ENCODE measurements at regions of chr11 and their contacts with region 1.

Region 1: DNA sequence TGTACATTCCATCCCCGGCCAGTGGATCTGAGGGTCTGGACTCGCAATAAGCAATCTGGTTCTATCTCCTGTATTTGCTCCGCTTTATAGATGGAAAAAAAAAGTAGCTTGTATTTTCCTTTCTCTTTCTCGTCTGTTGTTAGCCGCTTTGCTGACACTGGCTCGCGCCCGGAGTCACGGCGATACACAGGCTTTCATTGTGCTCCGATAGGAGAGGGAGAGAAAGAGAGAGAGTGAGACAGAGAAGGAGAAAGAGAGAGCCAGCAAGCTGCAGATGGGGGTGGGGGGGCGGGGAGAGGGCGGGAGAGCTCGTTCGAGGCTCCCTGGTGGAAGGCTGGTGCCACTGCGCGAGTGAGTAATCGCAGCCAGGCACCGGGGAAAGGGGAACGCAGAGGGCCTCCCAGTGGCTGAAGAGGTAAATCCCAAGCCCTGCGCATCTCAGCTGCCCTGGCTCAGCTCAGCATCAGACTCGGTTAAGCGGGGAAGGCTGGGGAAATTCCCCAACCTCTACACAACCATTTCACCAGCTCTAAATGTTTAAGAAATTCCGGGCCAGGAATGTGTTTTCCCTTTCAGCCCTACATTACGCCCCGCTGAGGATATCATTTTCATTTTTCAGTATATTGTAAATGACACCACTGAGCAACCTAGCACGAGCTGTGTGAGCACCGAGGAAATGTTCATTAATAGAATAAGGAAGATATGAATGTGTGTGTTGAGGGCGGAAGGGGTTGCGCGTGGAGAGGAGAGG is at the start of gene MAML2:
- DNase-seq: peak; percentile 81 to 84
- H3K4me3 ChIP-seq: peak within 1 kb of the TSS; percentile 48 to 95 (median 70)
- H3K27ac ChIP-seq: no peak within 1 kb of the TSS
- H3K4me1 ChIP-seq: peaks cover 0 to 19% (median 6%) of the 10 kb centered on the region in 4 experiments; a peak in 6 of 7 replicates
- H3K27me3 ChIP-seq: peaks cover 0 to 3% (median 0%) of the 10 kb centered on the region in 4 experiments; a peak in 1 of 7 replicates
- CTCF ChIP-seq: peak; percentile 89 to 98 (median 95)
- EP300 ChIP-seq: peak in 1 of 2 experiments; percentile 5; a peak in 1 of 3 replicates
- POLR2A ChIP-seq: no peak
- RAD21 ChIP-seq: peak; percentile 87 to 93
- total RNA-seq, gene MAML2: 6.6 and 6.8 TPM in 2 replicates

Region 2: DNA sequence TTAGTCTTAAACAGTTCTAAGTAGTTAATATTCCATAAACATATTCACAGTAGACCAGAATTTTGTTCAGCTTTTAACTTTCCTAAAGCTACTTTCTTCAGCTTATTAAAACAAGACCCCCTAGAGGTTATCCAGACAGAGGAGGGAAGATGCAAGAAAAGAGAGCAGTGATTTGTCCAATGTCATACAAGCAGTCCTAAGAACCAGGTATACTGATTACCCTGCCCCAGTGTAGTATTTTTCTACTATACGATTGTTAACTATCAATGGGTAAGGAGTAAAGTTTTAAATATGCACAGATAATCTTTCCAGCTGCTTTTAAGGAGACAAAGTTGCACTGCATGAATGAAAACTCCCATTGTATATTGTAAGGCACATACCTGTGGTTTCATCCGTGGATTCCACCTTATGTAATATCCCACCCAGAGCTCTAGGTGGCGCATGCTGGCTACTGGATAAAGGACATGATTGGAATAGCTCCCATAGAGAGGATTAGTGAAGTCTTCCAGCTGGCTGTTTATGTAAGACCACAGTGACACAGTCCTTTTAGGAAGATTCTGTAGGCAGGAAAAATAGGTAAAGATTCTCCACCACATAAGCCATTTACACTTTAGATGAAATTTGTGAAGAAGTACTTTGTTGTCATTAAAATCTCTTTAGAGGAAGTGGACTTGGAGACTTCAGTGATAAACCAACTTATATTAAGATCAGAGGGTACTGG is 507.2 kb before region 1 on chr11:
- CTCF ChIA-PET with region 1: interaction called, 16 read pairs
- POLR2A ChIA-PET with region 1: interaction called, 3 read pairs
- DNase-seq: peak; percentile 5 to 55
- H3K4me3 ChIP-seq: no peak overlapping the region
- H3K27ac ChIP-seq: no peak overlapping the region
- H3K4me1 ChIP-seq: no peaks in the 10 kb centered on the region
- H3K27me3 ChIP-seq: no peaks in the 10 kb centered on the region
- CTCF ChIP-seq: peak; percentile 6 to 85 (median 74)
- EP300 ChIP-seq: no peak
- POLR2A ChIP-seq: no peak
- RAD21 ChIP-seq: peak; percentile 86 to 92

Region 3: DNA sequence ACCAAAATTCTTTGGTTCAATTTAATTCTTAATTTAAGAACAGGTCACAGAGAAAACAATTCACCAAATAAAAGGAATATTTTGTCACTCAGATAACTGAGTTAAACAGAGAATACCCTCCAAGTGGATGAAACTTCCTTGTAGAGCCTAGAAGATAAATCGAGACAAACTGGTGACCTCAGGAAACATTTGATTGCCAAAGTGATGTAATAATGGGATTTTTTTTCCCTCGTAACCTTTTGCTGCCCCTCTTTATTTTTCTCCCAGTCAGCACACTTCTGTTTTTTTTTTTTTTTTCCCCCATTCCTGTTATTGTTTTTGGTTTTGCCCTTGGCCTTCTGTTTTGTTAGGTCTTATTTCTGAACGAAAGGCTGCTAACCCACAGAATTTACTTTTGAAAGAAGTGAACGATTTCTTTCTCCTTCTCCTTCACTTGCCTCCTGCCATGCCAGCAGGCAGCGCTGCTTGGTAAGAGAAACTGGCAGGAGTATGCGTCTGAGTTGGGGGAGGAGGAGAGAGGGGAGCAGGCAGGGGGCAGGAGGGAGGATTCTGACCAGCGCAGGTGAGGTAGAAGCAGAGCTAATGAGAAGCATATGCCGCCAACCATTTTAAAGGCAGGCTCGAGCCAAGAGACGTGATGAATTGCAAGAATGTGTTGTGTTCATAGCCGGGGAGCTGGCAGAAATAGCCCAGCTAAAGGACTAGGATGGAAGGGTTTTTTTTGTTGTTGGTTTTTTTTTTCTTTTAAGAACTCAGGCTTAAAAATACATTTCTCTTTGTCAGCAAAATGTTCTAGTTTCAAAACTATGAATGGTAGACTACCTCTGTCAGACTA is 297.3 kb before region 1 on chr11:
- CTCF ChIA-PET with region 1: interaction called, 13 read pairs
- POLR2A ChIA-PET with region 1: no interaction called
- DNase-seq: peak; percentile 57 to 73
- H3K4me3 ChIP-seq: no peak overlapping the region; a peak in 3 of 8 replicates
- H3K27ac ChIP-seq: no peak overlapping the region
- H3K4me1 ChIP-seq: peaks cover 2 to 7% (median 4%) of the 10 kb centered on the region in 4 experiments; a peak in 5 of 7 replicates
- H3K27me3 ChIP-seq: no peaks in the 10 kb centered on the region
- CTCF ChIP-seq: peak; percentile 49 to 69 (median 65)
- EP300 ChIP-seq: no peak
- POLR2A ChIP-seq: no peak
- RAD21 ChIP-seq: peak; percentile 87 to 88

Region 4: DNA sequence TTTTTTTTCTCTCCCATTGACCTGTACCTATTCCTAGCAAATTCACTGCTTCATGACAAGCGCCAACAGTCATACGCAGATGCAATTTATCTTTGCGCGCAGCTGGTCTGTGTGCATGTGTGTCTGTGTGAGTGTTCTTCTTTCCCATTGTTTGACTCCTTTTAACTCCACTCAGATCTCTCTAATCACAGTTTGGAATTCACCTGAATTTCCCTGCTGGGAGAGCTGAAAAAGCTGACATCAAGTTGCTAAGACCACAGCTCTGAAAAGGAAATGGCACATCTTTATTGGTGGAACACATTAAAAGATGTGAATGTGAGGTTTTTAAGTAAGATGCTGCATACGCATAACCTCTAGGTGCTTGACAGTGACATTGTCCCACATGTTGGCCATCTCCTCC is 231.8 kb before region 1 on chr11:
- CTCF ChIA-PET with region 1: interaction called, 19 read pairs
- POLR2A ChIA-PET with region 1: no interaction called
- DNase-seq: no peak
- H3K4me3 ChIP-seq: no peak overlapping the region
- H3K27ac ChIP-seq: no peak overlapping the region
- H3K4me1 ChIP-seq: peaks cover 0 to 3% (median 1%) of the 10 kb centered on the region in 4 experiments; a peak in 2 of 7 replicates
- H3K27me3 ChIP-seq: no peaks in the 10 kb centered on the region
- CTCF ChIP-seq: no peak
- EP300 ChIP-seq: no peak
- POLR2A ChIP-seq: no peak
- RAD21 ChIP-seq: no peak

Region 5: GRCh38 chr11:96254087-96254486 is 89.0 kb before region 1 on chr11:
- CTCF ChIA-PET with region 1: interaction called, 11 read pairs
- POLR2A ChIA-PET with region 1: no interaction called
- DNase-seq: no peak
- H3K4me3 ChIP-seq: no peak overlapping the region
- H3K27ac ChIP-seq: no peak overlapping the region
- H3K4me1 ChIP-seq: peaks cover 0 to 3% (median 0%) of the 10 kb centered on the region in 4 experiments; a peak in 2 of 7 replicates
- H3K27me3 ChIP-seq: no peaks in the 10 kb centered on the region; a peak in 1 of 7 replicates
- CTCF ChIP-seq: no peak
- EP300 ChIP-seq: no peak
- POLR2A ChIP-seq: no peak
- RAD21 ChIP-seq: no peak

Region 6: GRCh38 chr11:96306933-96307775 is 36.0 kb before region 1 on chr11:
- CTCF ChIA-PET with region 1: interaction called, 27 read pairs
- POLR2A ChIA-PET with region 1: interaction called, 3 read pairs
- DNase-seq: no peak
- H3K4me3 ChIP-seq: peak overlapping the region in 1 of 4 experiments; percentile 37; a peak in 2 of 8 replicates
- H3K27ac ChIP-seq: no peak overlapping the region
- H3K4me1 ChIP-seq: peaks cover 0 to 17% (median 10%) of the 10 kb centered on the region in 4 experiments; a peak in 4 of 7 replicates
- H3K27me3 ChIP-seq: no peaks in the 10 kb centered on the region
- CTCF ChIP-seq: no peak
- EP300 ChIP-seq: no peak
- POLR2A ChIP-seq: no peak
- RAD21 ChIP-seq: no peak

Measured in H1 (cell line).